ENCODE measurements at regions of chr10 and their contacts with region 1.

Region 1: DNA sequence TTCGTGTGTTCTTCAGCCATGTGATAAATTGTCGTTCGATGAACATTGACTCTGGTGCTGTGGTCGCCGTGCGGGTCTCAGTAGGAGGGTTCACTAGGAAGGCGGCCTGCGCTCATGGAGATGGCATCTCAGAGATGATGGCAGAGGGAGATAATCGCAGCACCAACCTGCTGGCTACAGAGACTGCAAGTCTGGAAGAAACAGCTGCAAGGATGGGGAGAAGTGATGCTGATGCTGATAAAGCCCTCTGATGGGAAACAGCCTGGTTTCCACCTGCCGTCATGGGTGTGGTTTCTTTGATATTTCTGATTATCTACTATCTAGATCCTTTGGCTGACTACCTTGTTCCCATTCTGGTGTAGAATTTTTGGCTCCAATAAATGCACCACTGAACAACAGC is 130.5 kb upstream of the ANKRD30A start:
- DNase-seq: no peak
- H3K4me3 ChIP-seq: no peak overlapping the region
- H3K27ac ChIP-seq: no peak overlapping the region
- H3K4me1 ChIP-seq: no peaks in the 10 kb centered on the region
- H3K27me3 ChIP-seq: no peaks in the 10 kb centered on the region
- CTCF ChIP-seq: no peak
- EP300 ChIP-seq: no peak
- POLR2A ChIP-seq: no peak

Region 2: GRCh38 chr10:37632641-37633040 is 637.8 kb after region 1 on chr10:
- in situ Hi-C with region 1: no loop called
- intact Hi-C with region 1: no loop called
- DNase-seq: no peak
- H3K4me3 ChIP-seq: no peak overlapping the region
- H3K27ac ChIP-seq: no peak overlapping the region
- H3K4me1 ChIP-seq: no peaks in the 10 kb centered on the region
- H3K27me3 ChIP-seq: no peaks in the 10 kb centered on the region
- CTCF ChIP-seq: no peak
- EP300 ChIP-seq: no peak
- POLR2A ChIP-seq: no peak

Region 3: DNA sequence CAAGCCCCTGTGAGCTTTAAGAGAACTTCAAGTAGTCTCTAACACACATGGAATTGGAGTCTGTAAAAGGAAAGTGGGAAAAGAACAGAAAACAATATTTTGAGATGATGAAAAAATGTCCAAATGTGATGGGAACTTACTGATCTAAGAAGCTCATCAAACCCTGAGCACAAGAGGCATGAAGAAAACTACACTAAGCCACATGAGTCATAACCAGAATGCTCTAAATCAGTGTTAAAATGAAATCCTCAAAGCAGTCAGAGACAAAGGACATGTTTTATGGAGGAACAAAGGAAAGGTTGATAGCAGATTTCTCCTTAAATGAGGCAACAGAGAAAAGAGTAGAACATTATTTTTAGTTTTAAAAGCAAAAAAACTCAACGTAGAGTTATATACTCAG is 1052.8 kb after region 1 on chr10:
- in situ Hi-C with region 1: no loop called
- intact Hi-C with region 1: loop called (anchors 5 kb)
- DNase-seq: no peak
- H3K4me3 ChIP-seq: no peak overlapping the region
- H3K27ac ChIP-seq: no peak overlapping the region
- H3K4me1 ChIP-seq: no peaks in the 10 kb centered on the region
- H3K27me3 ChIP-seq: no peaks in the 10 kb centered on the region
- CTCF ChIP-seq: no peak
- EP300 ChIP-seq: no peak
- POLR2A ChIP-seq: no peak

Measured in transverse colon (tissue), 4 donors.